Left ventricle myocardium inferior (tissue), 1 donor: ENCODE measurements at regions of chr4 and their contacts with region 1.

Region 1: DNA sequence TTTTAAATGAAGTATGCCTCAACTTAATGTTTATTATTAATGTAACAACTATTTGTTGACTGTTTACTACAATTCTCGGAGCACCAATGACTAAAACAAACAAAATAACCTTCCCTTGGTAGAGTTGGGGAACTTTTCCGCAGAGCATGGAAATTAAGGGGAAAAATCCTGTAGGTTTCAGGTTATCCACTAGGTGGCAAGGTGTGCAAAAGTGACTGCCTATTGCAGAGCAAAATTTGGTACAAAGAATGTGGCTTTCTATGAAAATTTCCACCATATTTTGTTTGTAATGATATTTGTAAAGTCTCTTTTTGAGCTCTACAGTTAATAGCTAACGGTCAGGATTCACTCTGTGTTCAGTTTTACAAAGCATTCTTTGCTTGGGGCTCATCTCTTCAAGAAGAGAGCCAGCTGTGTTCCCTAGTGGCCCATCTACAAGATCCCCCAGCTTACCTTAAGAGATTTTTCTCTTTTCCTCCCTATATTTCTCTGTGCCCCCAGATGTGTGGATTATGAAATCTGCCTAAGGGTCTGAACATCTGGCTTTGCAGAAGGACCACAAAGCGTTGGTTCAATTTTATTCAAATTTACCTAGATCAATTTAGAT is 61.1 kb downstream of the FBXO8 start:
- DNase-seq: no peak
- H3K4me3 ChIP-seq: no peak overlapping the region
- H3K27ac ChIP-seq: no peak overlapping the region
- H3K4me1 ChIP-seq: peaks cover 12% of the 10 kb centered on the region
- H3K27me3 ChIP-seq: peaks cover 22% of the 10 kb centered on the region
- CTCF ChIP-seq: peak; percentile 74

Region 2: DNA sequence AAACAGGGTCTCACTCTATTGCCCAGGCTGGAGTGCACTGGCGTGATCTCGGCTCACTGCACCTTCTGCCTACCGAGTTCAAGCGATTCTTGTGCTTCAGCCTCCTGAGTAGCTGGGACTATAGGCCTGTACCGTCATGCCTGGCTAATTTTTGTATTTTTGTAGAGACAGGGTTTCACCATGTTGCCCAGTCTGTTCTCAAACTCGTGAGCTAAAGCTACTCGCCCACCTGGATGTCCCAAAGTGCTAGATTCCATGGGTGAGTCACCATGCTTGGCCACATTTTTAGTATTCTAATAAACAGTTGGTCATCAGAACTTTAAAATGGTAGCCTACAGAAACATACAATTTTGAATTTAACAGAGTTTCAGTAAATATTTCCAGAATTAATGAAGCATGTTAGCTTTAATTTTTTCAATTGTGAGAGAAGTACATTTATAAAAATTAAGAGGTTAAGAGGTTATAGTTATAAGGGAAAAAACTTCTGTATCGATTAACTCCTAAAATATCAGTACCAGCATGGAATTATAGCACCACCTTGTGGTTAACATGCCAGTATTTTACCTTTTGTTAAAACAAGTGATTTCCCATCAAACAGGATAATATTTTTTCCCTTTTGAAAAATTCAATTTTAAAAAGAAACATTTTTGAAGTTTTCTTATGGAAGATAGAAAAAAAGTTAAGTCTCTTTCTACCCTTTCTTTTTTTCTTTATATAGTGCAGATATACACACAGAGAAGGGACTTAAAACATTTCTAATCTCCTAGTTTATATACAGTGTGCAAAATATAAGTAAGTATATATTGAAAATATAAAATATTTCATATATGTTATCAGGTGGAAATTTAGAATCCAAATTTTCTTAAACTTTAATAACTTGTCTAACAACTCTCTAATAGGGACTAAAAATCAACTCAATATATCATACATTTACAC is 96.7 kb after region 1 on chr4:
- intact Hi-C with region 1: loop called (anchors 10 kb)
- DNase-seq: no peak
- H3K4me3 ChIP-seq: no peak overlapping the region
- H3K27ac ChIP-seq: no peak overlapping the region
- H3K4me1 ChIP-seq: no peaks in the 10 kb centered on the region
- H3K27me3 ChIP-seq: no peaks in the 10 kb centered on the region
- CTCF ChIP-seq: peak; percentile 80

Region 3: DNA sequence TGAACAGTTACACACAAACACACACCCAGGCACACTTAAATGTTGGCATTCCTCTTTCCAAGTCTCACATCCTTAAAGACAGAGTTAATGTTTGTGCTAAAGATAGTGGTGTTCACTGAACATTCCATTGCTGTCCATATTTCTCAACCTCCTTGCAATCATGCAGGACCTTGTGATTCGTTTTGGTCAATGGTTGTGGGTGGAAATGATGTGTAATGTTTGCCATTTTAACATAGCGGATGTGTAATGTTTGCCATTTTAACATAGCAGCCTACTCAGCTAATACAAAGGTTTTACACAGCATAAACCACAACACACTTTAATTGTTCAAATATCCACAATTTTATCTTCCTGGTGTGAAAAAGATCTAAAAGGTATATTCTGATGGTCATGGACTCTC is 155.2 kb after region 1 on chr4:
- intact Hi-C with region 1: no loop called
- DNase-seq: no peak
- H3K4me3 ChIP-seq: no peak overlapping the region
- H3K27ac ChIP-seq: no peak overlapping the region
- H3K4me1 ChIP-seq: no peaks in the 10 kb centered on the region
- H3K27me3 ChIP-seq: peaks cover 6% of the 10 kb centered on the region
- CTCF ChIP-seq: no peak